T-cell (primary cell): ENCODE measurements at regions of chrX and their contacts with region 1.

Region 1: GRCh38 chrX:49644991-49645637 is 46.3 kb downstream of the GAGE1 start:
- DNase-seq: no peak
- ATAC-seq: no peak
- H3K4me3 ChIP-seq: no peak overlapping the region
- H3K4me3 Mint-ChIP-seq: no peak overlapping the region
- H3K27ac ChIP-seq: no peak overlapping the region
- H3K27ac Mint-ChIP-seq: no peak overlapping the region
- H3K4me1 ChIP-seq: no peaks in the 10 kb centered on the region
- H3K4me1 Mint-ChIP-seq: no peaks in the 10 kb centered on the region
- H3K27me3 ChIP-seq: peaks cover 0 to 9% of the 10 kb centered on the region in 2 experiments
- H3K27me3 Mint-ChIP-seq: peaks cover 1 to 19% of the 10 kb centered on the region in 2 donors

Region 2: GRCh38 chrX:49618574-49618973 is 26.5 kb before region 1 on chrX:
- CTCF ChIA-PET with region 1: no interaction called
- POLR2A ChIA-PET with region 1: no interaction called
- DNase-seq: no peak
- ATAC-seq: no peak
- H3K4me3 ChIP-seq: no peak overlapping the region
- H3K4me3 Mint-ChIP-seq: no peak overlapping the region
- H3K27ac ChIP-seq: no peak overlapping the region
- H3K27ac Mint-ChIP-seq: no peak overlapping the region
- H3K4me1 ChIP-seq: no peaks in the 10 kb centered on the region
- H3K4me1 Mint-ChIP-seq: no peaks in the 10 kb centered on the region
- H3K27me3 ChIP-seq: no peaks in the 10 kb centered on the region
- H3K27me3 Mint-ChIP-seq: peaks cover 1 to 7% of the 10 kb centered on the region in 2 donors

Region 3: DNA sequence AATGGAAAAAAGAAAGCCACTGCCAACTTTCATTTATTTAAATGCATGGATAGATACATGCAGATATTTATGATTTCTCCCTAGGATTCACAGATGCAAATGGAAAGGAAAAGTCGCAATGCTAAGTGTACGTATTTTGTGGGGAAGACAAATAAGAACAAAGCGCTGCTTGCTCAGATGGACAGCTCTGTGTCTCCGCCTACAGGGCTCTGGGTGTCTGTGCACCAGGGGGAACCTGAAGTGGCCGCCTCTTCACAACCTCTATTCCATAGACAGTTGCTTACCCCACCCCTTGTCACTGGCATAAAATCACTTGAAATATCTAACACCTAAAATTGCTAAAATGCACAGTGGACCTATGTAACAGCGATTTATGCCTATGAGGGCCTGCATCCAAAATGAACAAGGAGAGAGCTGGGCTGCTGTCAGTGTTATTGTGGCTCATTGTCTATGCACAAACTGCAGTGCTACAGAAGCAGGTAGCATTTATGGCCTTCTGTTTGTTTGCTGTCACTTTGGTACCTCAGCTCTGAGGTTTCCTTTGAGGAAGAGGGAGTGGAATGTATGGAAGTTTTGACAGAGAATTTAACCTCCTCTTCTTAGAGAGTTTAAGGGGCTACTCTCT is 109.2 kb after region 1 on chrX:
- CTCF ChIA-PET with region 1: no interaction called
- POLR2A ChIA-PET with region 1: interaction called in 1 of 2 experiments, 12 read pairs
- DNase-seq: peak in 34 of 35 experiments; percentile 6 to 67 (median 34)
- ATAC-seq: peak; percentile 71 to 74 (median 72)
- H3K4me3 ChIP-seq: no peak overlapping the region
- H3K4me3 Mint-ChIP-seq: no peak overlapping the region
- H3K27ac ChIP-seq: no peak overlapping the region
- H3K27ac Mint-ChIP-seq: no peak overlapping the region
- H3K4me1 ChIP-seq: no peaks in the 10 kb centered on the region
- H3K4me1 Mint-ChIP-seq: peaks cover 0 to 2% (median 2%) of the 10 kb centered on the region in 3 donors
- H3K27me3 ChIP-seq: no peaks in the 10 kb centered on the region
- H3K27me3 Mint-ChIP-seq: peaks cover 11 to 44% of the 10 kb centered on the region in 2 donors